Tibial artery (tissue), 4 donors: ENCODE measurements at regions of chr5 and their contacts with region 1.

Region 1: DNA sequence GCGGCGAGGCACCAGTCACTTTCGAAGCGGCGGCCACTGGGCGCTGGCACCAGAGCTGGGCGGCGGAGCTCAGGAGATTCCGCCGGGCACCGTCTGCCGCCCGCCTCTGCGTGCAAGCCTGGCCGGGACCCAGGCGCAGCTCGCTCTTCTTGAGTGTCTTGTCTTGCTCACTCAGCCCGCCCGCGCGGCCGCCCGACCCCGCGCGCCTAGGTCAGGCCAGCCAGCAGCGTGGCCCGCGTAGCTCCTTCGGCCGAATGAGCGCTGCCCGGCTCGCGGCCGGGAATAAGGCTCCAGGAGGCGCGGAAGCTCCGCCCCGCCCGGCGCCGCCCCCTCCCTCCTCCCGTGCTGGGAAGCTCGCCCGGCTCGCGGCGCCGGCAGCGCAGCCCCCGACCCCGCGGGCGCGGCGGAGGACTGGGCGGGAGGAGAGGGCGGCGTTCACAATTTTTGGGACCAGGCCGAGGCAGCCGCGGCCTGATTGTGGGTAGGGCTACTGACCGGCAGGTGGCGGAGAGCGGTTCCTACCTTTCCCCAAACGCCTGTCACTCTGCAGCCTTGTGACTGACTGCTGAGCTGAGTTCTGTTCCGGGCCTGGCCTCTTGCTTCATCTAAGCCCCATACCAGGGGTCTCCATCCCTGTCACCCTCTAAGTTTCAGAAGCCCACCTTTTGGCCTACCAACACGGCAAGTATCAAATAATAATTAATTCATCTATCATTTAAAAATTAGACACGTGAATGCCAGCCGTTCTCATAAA is at the start of gene HBEGF:
- DNase-seq: peak; percentile 72 to 88
- H3K4me3 ChIP-seq: peak within 1 kb of the TSS; percentile 68
- H3K27ac ChIP-seq: peak within 1 kb of the TSS; percentile 65 to 77
- H3K4me1 ChIP-seq: peaks cover 0 to 41% (median 28%) of the 10 kb centered on the region in 4 donors
- H3K27me3 ChIP-seq: no peaks in the 10 kb centered on the region
- CTCF ChIP-seq: peak; percentile 48 to 56

Region 2: DNA sequence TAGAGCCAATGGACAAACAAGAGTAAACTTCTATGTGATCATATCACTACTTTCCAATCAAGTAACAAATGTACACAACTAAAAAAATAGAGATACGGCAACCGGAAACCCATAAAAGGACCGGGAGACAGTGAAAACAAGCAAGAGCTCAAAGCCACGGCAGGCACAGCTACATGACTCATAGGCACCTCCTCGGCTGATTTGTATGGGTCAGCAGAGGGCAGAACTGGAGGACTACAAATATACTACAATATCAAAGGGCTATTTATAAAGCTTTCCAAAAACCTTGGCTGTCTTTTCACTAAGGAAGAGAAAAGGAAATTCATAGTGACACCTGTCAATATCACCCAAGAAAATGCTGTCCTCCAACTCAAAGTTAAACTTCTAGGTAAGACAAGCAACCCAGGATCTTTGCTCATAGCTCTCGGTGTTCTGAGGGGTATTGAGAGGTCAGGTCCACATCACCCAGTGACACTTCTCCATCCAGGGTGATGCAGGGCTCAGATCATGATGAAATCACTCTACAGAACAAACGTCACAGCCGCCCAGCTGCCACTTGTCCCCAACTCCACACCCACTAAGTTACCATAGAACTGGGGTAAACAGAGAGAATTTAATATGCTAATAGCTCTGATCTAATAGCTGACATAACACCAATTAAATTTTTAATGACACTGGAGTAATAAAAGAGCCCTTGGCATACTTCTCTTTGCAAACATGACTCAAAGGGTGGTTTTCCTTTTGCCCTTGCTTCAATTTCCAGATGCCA is 84.9 kb before region 1 on chr5:
- intact Hi-C with region 1: loop called (anchors 5 kb)
- DNase-seq: peak; percentile 79 to 81
- H3K4me3 ChIP-seq: no peak overlapping the region
- H3K27ac ChIP-seq: peak overlapping the region; percentile 47 to 69
- H3K4me1 ChIP-seq: peaks cover 0 to 18% (median 9%) of the 10 kb centered on the region in 4 donors
- H3K27me3 ChIP-seq: no peaks in the 10 kb centered on the region
- CTCF ChIP-seq: no peak

Region 3: DNA sequence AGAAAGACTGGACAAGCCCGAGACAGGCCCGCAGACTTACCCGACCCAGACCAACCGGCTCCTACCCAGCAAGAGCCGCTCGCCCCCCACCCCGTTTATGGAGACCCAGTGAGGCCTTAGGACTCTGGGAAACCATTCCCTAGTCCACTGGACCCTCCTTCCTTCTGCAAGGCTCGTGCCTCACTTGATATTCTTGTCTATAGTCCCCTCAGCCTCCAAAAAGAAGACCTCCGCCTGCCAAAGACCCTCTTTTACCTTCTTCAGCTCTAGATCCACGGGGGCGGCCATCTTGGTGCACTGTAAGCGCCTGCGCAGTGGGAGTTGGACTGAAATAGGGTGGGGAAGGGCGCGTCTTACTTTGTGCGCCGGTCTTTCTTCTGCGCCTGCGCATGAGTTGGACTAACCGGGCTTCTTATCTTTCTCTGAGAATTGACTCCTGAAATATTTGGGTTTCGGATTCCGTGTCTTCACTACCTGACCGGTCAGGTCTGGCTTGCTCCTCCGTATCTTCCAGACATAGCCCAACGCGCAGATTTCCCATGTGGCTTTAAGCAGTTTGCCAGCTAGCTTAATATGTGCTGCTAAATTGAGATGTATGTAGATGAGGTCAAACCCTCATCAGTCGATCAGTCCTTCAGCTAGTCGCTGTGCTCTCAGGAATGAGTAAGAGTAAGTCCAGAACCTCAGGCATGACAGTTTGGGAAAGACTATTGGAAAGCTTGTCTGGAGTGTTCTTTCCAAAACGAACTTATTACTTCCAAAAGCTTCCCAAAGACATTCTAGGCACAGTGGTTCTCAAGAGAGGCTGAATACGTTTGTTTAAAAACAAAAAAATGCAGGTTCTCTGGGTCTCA is 43.5 kb before region 1 on chr5 and contains the start of gene PFDN1:
- intact Hi-C with region 1: loop called (anchors 5 kb)
- DNase-seq: peak; percentile 95
- H3K4me3 ChIP-seq: peak within 1 kb of the TSS; percentile 72 to 97
- H3K27ac ChIP-seq: peak within 1 kb of the TSS; percentile 84 to 86
- H3K4me1 ChIP-seq: peaks cover 0 to 30% (median 19%) of the 10 kb centered on the region in 4 donors
- H3K27me3 ChIP-seq: no peaks in the 10 kb centered on the region
- CTCF ChIP-seq: no peak